Endothelial cell of umbilical vein (primary cell): ENCODE measurements at regions of chr11 and their contacts with region 1.

Region 1: GRCh38 chr11:26227296-26227695 is 104.6 kb upstream of the ANO3 start:
- DNase-seq: peak; percentile 92
- H3K4me3 ChIP-seq: no peak overlapping the region
- H3K27ac ChIP-seq: peak overlapping the region; percentile 87
- H3K4me1 ChIP-seq: peaks cover 49% of the 10 kb centered on the region
- H3K27me3 ChIP-seq: no peaks in the 10 kb centered on the region
- CTCF ChIP-seq: peak; percentile 34 to 43
- POLR2A ChIP-seq: no peak

Region 2: DNA sequence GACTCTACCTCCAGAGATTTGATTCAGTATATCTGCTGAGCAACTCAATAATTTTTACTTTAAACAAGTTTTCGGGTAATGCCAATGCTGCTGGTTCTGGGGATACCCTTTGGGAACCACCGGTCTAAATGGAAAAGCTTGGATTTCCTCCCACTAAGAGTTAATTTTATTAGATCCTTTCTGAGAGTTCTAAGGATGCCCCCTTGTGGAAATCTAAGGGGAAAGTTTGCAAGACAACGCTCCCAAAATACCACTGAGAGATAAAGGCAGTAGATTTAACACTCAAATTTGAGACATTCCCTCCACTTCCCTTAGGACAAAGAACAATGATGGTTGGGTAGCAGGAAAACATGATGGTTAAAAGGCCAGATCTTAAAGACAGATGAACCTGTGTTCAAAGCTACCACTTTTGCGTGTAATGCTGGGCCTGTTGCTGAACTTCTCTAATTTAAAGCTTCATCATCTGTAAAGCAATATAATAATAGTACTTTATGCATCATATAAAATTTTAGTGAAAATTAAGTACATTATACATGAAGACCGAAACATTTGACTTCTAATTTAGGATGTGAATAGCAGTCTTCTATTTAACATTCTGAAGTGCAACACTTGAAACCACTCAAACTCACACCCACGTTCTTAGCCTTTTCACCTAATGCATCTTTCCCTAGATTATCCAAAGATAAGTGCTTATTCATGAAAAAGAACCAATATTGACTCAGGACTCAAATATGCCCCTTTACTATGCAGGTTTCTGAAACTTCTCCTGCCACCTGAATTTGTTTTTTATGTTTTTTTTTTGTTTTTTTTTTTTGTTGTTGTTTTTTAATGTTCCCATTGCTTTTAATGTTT is 1840.5 kb before region 1 on chr11:
- CTCF ChIA-PET with region 1: interaction called, 3 read pairs
- POLR2A ChIA-PET with region 1: no interaction called
- dilution Hi-C with region 1: no loop called
- intact Hi-C with region 1: loop called (anchors 2 kb)
- DNase-seq: peak; percentile 38
- H3K4me3 ChIP-seq: no peak overlapping the region
- H3K27ac ChIP-seq: no peak overlapping the region
- H3K4me1 ChIP-seq: no peaks in the 10 kb centered on the region
- H3K27me3 ChIP-seq: no peaks in the 10 kb centered on the region
- CTCF ChIP-seq: peak; percentile 18 to 30
- POLR2A ChIP-seq: no peak

Region 3: DNA sequence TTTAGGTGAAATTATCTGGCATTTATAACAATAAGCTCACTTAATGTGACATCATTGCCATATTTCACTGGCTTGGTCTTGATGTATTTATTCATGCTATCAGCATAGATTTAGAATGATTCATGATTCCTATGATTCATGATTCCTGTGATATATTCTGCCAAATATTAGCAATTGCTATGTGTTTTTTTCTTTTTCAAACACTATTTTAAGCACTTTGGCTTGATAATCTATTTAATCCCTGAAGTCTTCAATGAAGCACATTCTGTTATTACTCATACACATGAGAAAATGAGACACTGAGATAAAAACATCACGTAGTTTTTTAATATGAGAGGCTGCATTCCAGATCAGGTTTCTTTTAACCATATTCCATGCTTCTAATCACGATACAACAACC is 1651.9 kb before region 1 on chr11:
- CTCF ChIA-PET with region 1: no interaction called
- POLR2A ChIA-PET with region 1: no interaction called
- dilution Hi-C with region 1: no loop called
- intact Hi-C with region 1: loop called (anchors 5 kb)
- DNase-seq: peak; percentile 88
- H3K4me3 ChIP-seq: peak overlapping the region in 1 of 3 experiments; percentile 18
- H3K27ac ChIP-seq: peak overlapping the region; percentile 76
- H3K4me1 ChIP-seq: peaks cover 13% of the 10 kb centered on the region
- H3K27me3 ChIP-seq: no peaks in the 10 kb centered on the region
- CTCF ChIP-seq: no peak
- POLR2A ChIP-seq: no peak

Region 4: DNA sequence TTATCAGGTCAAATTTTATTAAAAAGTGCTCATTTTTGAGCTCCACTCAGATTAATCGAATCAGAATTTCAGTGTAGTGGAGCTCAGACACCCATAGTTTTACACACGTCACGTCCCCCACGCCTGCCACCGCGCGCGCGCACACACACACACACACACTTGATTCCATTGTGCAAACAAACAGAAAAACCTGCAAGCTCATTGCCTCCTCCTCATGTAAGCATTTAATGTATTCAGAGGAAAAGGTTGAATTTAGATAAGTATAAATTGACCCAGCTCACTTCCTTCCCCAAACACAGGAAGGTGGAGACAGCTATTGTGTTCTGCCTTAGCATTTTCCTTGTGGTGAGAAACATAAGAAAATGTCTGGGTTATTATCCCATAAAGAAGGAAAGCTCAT is 1393.7 kb before region 1 on chr11:
- CTCF ChIA-PET with region 1: no interaction called
- POLR2A ChIA-PET with region 1: no interaction called
- dilution Hi-C with region 1: no loop called
- intact Hi-C with region 1: loop called (anchors 5 kb)
- DNase-seq: peak; percentile 73
- H3K4me3 ChIP-seq: no peak overlapping the region
- H3K27ac ChIP-seq: peak overlapping the region; percentile 34
- H3K4me1 ChIP-seq: peaks cover 26% of the 10 kb centered on the region
- H3K27me3 ChIP-seq: no peaks in the 10 kb centered on the region
- CTCF ChIP-seq: no peak
- POLR2A ChIP-seq: no peak

Region 5: GRCh38 chr11:26065944-26066343 is 161.4 kb before region 1 on chr11:
- CTCF ChIA-PET with region 1: interaction called, 4 read pairs
- POLR2A ChIA-PET with region 1: no interaction called
- dilution Hi-C with region 1: no loop called
- intact Hi-C with region 1: loop called (anchors 1 kb)
- DNase-seq: peak; percentile 69
- H3K4me3 ChIP-seq: peak overlapping the region in 1 of 3 experiments; percentile 16
- H3K27ac ChIP-seq: peak overlapping the region; percentile 29
- H3K4me1 ChIP-seq: peaks cover 15% of the 10 kb centered on the region
- H3K27me3 ChIP-seq: no peaks in the 10 kb centered on the region
- CTCF ChIP-seq: no peak
- POLR2A ChIP-seq: no peak

Region 6: DNA sequence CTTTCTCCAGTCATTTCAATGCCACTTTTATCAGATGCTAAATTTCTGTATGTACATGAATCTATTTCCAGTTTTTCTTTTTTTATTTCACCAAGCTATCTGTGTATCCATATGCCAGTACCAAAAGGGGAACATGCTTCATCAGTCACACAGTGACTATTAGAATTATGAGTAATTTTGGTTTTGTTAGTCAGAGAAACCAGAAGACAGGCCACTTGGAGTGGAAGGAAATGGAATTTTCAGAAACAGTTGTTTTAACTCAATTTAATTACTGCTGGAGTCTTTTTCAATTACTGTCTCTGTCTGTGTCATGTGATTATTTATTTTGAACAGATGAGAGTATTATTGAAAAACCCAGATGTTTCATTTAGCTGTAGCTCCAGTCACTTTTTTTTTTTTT is 20.0 kb after region 1 on chr11:
- CTCF ChIA-PET with region 1: interaction called, 10 read pairs
- POLR2A ChIA-PET with region 1: no interaction called
- dilution Hi-C with region 1: no loop called
- intact Hi-C with region 1: no loop called
- DNase-seq: no peak
- H3K4me3 ChIP-seq: no peak overlapping the region
- H3K27ac ChIP-seq: no peak overlapping the region
- H3K4me1 ChIP-seq: no peaks in the 10 kb centered on the region
- H3K27me3 ChIP-seq: no peaks in the 10 kb centered on the region
- CTCF ChIP-seq: no peak
- POLR2A ChIP-seq: no peak

Region 7: GRCh38 chr11:26286472-26287066 is 59.3 kb after region 1 on chr11:
- CTCF ChIA-PET with region 1: interaction called, 22 read pairs
- POLR2A ChIA-PET with region 1: no interaction called
- dilution Hi-C with region 1: no loop called
- intact Hi-C with region 1: loop called (anchors 2 kb)
- DNase-seq: peak; percentile 37
- H3K4me3 ChIP-seq: no peak overlapping the region
- H3K27ac ChIP-seq: no peak overlapping the region
- H3K4me1 ChIP-seq: peaks cover 7% of the 10 kb centered on the region
- H3K27me3 ChIP-seq: no peaks in the 10 kb centered on the region
- CTCF ChIP-seq: peak; percentile 21 to 59
- POLR2A ChIP-seq: no peak

Region 8: GRCh38 chr11:26331911-26332571 is 104.7 kb after region 1 on chr11 and contains the start of gene ANO3:
- CTCF ChIA-PET with region 1: no interaction called
- POLR2A ChIA-PET with region 1: no interaction called
- dilution Hi-C with region 1: no loop called
- intact Hi-C with region 1: no loop called
- DNase-seq: peak; percentile 65
- H3K4me3 ChIP-seq: no peak within 1 kb of the TSS
- H3K27ac ChIP-seq: no peak within 1 kb of the TSS
- H3K4me1 ChIP-seq: no peaks in the 10 kb centered on the region
- H3K27me3 ChIP-seq: peaks cover 6 to 16% of the 10 kb centered on the region in 2 experiments
- CTCF ChIP-seq: peak; percentile 43 to 79
- POLR2A ChIP-seq: no peak
- total RNA-seq, gene ANO3: not detected in 2 replicates